Heart right ventricle (tissue), 16 donors: ENCODE measurements at regions of chr4 and their contacts with region 1.

Region 1: GRCh38 chr4:16001484-16001858 is 38.5 kb upstream of the FGFBP2 start:
- DNase-seq: peak in 1 of 2 donors; percentile 55
- ATAC-seq: peak; percentile 84 to 95 (median 94)
- H3K4me3 ChIP-seq: no peak overlapping the region
- H3K27ac ChIP-seq: no peak overlapping the region
- H3K4me1 ChIP-seq: peaks cover 0 to 13% (median 4%) of the 10 kb centered on the region in 9 donors
- H3K27me3 ChIP-seq: no peaks in the 10 kb centered on the region
- CTCF ChIP-seq: peak; percentile 72 to 88 (median 85)

Region 2: DNA sequence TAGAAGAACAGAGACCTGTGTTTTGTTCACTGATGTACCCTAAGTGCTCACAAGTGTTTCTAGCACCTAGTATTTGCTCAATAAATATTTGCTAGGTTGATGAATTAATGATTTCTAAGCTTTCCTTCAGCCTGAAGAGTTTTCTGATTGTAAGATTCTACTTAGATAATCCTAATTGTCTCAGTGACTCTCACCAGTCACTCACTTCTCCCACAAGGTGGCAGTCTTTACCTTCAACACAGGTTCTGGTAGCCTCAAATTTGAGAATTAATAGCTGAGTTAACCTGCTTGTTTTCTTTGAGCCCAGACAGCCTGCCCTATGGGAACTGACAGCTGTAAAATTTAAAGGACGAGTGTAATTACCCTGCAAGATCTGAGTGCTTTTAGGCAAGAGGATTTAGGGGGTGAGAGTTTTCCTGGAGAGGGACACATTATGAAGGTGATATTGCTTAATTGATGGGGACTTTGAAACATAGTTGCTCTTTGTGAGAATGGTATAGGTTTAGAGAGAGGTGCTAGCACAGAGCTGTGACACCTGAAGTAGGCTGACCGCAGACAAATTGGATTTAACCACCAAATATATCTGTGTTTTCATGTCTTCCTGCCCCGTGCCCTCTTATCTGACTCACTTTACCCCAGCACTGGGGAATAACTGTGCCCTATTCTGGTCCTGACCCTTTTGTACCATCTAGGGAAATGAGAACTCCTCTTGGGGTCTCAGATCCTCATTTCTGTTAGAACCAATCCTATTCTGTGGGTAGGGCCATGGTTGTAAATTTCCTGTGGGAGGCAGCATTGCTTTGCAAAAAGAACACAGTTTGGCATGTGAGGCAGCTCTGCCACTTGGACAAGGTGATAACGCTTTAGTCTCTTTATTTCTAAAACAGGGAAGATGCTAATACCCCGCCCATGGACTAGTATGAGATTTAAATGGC is 195.6 kb before region 1 on chr4:
- intact Hi-C with region 1: loop called in 5 of 10 experiments (anchors 1 to 5 kb)
- DNase-seq: peak in 1 of 2 donors; percentile 30
- ATAC-seq: peak in 7 of 8 donors; percentile 15 to 78 (median 67)
- H3K4me3 ChIP-seq: no peak overlapping the region
- H3K27ac ChIP-seq: no peak overlapping the region
- H3K4me1 ChIP-seq: peaks cover 0 to 29% (median 3%) of the 10 kb centered on the region in 9 donors
- H3K27me3 ChIP-seq: no peaks in the 10 kb centered on the region
- CTCF ChIP-seq: peak; percentile 47 to 78 (median 72)

Region 3: GRCh38 chr4:15963001-15963451 is 38.4 kb before region 1 on chr4 and contains the start of gene FGFBP2:
- intact Hi-C with region 1: loop called in 5 of 10 experiments (anchors 5 kb)
- DNase-seq: peak; percentile 30 to 56
- ATAC-seq: peak; percentile 64 to 79 (median 72)
- H3K4me3 ChIP-seq: peak within 1 kb of the TSS in 1 of 10 donors; percentile 5
- H3K27ac ChIP-seq: no peak within 1 kb of the TSS
- H3K4me1 ChIP-seq: peaks cover 0 to 20% (median 8%) of the 10 kb centered on the region in 9 donors
- H3K27me3 ChIP-seq: no peaks in the 10 kb centered on the region
- CTCF ChIP-seq: peak in 7 of 9 donors; percentile 37 to 53 (median 45)
- total RNA-seq, gene FGFBP2: 0.32 to 15.8 (median 1.6) TPM